Heart left ventricle (tissue), 16 donors: ENCODE measurements at regions of chr2 and their contacts with region 1.

Region 1: GRCh38 chr2:177812708-177813396 is 259.7 kb downstream of the PDE11A start:
- DNase-seq: no peak
- ATAC-seq: no peak
- H3K4me3 ChIP-seq: no peak overlapping the region
- H3K27ac ChIP-seq: no peak overlapping the region
- H3K4me1 ChIP-seq: no peaks in the 10 kb centered on the region
- H3K27me3 ChIP-seq: no peaks in the 10 kb centered on the region
- CTCF ChIP-seq: peak in 1 of 12 donors; percentile 8
- POLR2A ChIP-seq: no peak

Region 2: DNA sequence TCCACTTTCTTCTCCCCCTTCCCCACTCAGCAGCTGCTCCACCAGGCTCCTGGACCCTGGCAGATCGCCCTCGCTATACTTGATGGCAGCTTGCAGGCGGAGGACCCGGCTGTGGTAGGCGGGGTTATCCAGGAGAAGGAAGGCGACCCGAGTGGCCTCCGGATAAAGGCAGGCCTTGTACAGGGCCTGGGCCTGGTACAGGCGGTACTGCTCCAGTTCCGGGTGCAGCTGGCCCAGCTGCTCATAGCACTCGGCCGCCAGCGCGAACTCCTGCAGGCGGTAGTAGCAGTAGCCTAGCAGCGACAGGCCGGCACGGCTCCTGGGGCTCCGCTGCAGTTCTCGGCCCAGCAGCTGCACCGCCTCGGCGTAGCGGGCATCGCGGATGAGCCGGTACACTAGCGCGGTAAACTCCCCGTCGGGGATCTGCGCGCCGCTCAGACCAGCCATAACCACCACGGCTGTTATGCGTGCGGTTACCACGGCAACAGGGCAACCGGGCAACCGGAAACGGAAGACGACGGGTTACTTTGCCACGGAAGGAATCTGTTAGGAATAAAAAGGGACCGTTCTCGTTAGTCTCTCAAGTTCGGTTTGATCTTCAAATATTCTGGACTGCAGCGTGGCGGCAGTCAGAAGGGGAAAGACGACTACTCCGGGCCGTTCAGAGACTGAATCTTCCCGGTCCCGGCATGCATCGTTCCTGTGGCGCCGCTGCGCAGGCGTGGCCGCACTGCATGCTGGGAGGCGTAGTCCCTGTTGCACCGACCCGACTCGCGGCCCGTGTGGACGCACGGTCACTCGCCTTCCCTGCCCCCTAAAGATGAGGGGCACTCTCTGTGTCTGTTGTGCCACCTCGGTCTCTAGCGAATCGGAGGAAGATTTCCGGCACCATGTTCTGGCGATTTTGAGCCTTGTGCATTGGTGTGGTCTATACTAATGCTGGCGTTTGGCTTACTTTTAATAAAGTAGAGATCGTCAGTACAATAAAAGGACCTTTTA is 194.3 kb before region 1 on chr2:
- intact Hi-C with region 1: no loop called
- DNase-seq: peak; percentile 91 to 96 (median 93)
- ATAC-seq: peak; percentile 96 to 99 (median 98)
- H3K4me3 ChIP-seq: peak overlapping the region; percentile 62 to 94 (median 72)
- H3K27ac ChIP-seq: peak overlapping the region; percentile 92 to 100 (median 97)
- H3K4me1 ChIP-seq: peaks cover 0 to 19% (median 7%) of the 10 kb centered on the region in 12 donors
- H3K27me3 ChIP-seq: no peaks in the 10 kb centered on the region
- CTCF ChIP-seq: no peak
- POLR2A ChIP-seq: peak in 1 of 2 donors; percentile 50

Region 3: GRCh38 chr2:177868806-177869205 is 56.0 kb after region 1 on chr2:
- intact Hi-C with region 1: loop called in 1 of 10 experiments (anchors 5 kb)
- DNase-seq: no peak
- ATAC-seq: no peak
- H3K4me3 ChIP-seq: no peak overlapping the region
- H3K27ac ChIP-seq: no peak overlapping the region
- H3K4me1 ChIP-seq: peaks cover 0 to 9% (median 0%) of the 10 kb centered on the region in 12 donors
- H3K27me3 ChIP-seq: no peaks in the 10 kb centered on the region
- CTCF ChIP-seq: no peak
- POLR2A ChIP-seq: no peak